ENCODE measurements at regions of chr9 and their contacts with region 1.

Region 1: DNA sequence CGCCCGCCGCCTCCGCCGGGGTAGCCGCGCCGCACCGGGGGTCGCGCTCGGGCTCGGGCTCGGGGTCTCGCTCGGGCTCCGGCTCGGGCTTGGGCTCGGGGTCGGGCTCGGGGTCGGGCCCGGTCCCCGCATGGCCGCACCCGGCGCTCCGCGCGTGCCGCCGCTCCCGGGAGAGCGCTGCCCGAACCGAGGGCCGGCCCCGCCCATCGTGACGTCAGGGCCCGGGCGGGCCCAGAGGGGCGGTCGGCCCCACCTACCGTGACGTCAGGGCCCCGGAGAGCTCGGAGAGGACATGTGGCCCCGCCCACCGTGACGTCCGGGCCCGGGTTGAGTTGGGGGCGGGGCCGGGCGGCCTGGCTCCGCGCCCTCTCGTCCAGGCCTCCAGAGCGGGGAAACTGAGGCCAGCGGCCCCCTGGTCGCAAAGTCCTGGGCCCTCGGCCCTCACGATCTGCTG is at the start of gene NSMF:
- DNase-seq: peak; percentile 90
- H3K4me3 Mint-ChIP-seq: peak within 1 kb of the TSS; percentile 48
- H3K27ac Mint-ChIP-seq: peak within 1 kb of the TSS; percentile 12
- H3K4me1 Mint-ChIP-seq: peaks cover 9% of the 10 kb centered on the region
- H3K27me3 Mint-ChIP-seq: no peaks in the 10 kb centered on the region
- CTCF ChIP-seq: no peak
- total RNA-seq, gene NSMF: 37.8 and 43.1 TPM in 2 replicates

Region 2: DNA sequence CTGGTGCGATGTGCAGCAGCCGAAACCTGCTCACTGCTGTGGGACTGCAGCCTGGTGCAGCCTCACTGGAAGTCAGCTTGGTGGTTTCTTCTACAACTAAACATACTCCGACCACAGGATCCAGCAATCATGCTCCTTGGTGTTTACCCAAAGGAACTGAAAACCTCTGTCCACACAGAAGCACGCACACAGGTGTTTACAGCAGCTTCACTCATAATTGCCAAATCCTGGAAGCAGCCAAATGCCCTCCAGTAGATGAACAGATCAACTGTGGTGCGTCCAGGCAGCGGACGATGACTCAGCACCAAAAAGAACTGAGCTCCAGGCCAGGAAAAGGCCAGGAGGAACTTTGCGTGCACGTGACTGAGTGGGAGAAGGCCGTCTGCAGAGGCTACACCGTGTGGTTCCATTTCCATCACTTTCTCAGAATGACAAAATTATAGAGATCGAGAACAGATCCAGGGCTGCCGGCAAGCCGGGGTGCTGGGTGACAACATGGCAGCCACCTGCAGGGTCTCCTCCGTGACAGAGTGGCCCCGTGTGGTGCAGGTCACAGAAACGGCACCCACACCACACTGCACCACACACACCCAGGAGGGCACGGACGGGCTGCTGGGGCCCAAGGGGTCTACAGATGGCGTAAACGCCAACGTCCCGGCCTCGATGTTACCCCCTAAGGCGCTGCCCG is 23.1 kb after region 1 on chr9:
- CTCF ChIA-PET with region 1: no interaction called
- POLR2A ChIA-PET with region 1: interaction called, 10 read pairs
- intact Hi-C with region 1: no loop called
- DNase-seq: peak; percentile 96
- H3K4me3 Mint-ChIP-seq: peak overlapping the region; percentile 39
- H3K27ac Mint-ChIP-seq: peak overlapping the region; percentile 83
- H3K4me1 Mint-ChIP-seq: peaks cover 8% of the 10 kb centered on the region
- H3K27me3 Mint-ChIP-seq: no peaks in the 10 kb centered on the region
- CTCF ChIP-seq: no peak